Caco-2 (cell line): ENCODE measurements at regions of chr2 and their contacts with region 1.

Region 1: GRCh38 chr2:51120754-51121280 is 88.9 kb upstream of the NRXN1 start:
- DNase-seq: no peak
- H3K4me3 ChIP-seq: no peak overlapping the region
- H3K4me3 Mint-ChIP-seq: no peak overlapping the region
- H3K27ac Mint-ChIP-seq: no peak overlapping the region
- H3K4me1 ChIP-seq: no peaks in the 10 kb centered on the region
- H3K4me1 Mint-ChIP-seq: no peaks in the 10 kb centered on the region
- H3K27me3 ChIP-seq: no peaks in the 10 kb centered on the region
- H3K27me3 Mint-ChIP-seq: no peaks in the 10 kb centered on the region
- CTCF ChIP-seq: no peak

Region 2: DNA sequence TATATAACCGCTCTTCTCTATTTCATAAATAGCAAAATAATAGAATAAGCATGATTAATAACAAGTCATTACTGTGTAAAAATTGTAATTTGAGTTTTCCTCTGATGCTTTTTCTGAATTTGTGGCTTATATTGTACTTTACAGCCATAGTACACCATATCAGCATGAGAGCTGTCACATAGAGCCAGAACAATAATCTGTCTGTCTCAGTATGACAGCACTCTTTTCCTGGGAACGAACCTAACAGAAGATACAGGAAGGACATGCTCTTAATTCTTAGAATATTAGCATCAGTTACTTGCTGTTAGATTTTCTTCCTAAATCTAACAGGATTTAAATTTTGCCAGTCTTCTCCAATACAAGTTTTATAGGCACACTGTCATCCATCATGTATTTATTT is 67.6 kb before region 1 on chr2:
- CTCF ChIA-PET with region 1: no interaction called
- POLR2A ChIA-PET with region 1: no interaction called
- intact Hi-C with region 1: no loop called
- DNase-seq: no peak
- H3K4me3 ChIP-seq: no peak overlapping the region
- H3K4me3 Mint-ChIP-seq: no peak overlapping the region
- H3K27ac Mint-ChIP-seq: no peak overlapping the region
- H3K4me1 ChIP-seq: no peaks in the 10 kb centered on the region
- H3K4me1 Mint-ChIP-seq: no peaks in the 10 kb centered on the region
- H3K27me3 ChIP-seq: no peaks in the 10 kb centered on the region
- H3K27me3 Mint-ChIP-seq: no peaks in the 10 kb centered on the region
- CTCF ChIP-seq: no peak

Region 3: DNA sequence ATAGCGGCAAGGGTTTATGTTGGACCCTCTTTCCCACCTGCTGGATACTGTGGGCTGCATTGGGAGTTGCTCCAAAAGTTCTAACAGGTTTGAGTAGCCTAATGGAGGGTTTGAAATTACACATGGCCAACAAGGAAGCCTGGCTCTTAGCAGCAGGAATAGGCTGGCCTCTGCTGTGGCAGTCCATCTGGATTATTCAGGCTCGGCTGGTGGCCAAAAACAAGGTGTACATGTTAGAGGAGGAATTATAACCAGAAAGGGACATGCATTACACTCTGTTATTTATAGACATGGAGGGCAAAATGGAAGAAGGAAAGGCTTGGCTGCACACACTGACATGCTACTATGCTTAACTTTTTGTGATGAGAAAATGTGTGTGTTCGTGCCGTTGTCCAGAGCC is 27.8 kb before region 1 on chr2:
- CTCF ChIA-PET with region 1: no interaction called
- POLR2A ChIA-PET with region 1: no interaction called
- intact Hi-C with region 1: loop called (anchors 1 kb)
- DNase-seq: no peak
- H3K4me3 ChIP-seq: no peak overlapping the region
- H3K4me3 Mint-ChIP-seq: no peak overlapping the region
- H3K27ac Mint-ChIP-seq: no peak overlapping the region
- H3K4me1 ChIP-seq: no peaks in the 10 kb centered on the region
- H3K4me1 Mint-ChIP-seq: no peaks in the 10 kb centered on the region
- H3K27me3 ChIP-seq: no peaks in the 10 kb centered on the region
- H3K27me3 Mint-ChIP-seq: no peaks in the 10 kb centered on the region
- CTCF ChIP-seq: no peak